Right ventricle myocardium inferior (tissue), 1 donor: ENCODE measurements at regions of chr2 and their contacts with region 1.

Region 1: GRCh38 chr2:237474931-237475703 is 11.9 kb upstream of the MLPH start:
- DNase-seq: peak; percentile 91
- ATAC-seq: peak; percentile 93

Region 2: DNA sequence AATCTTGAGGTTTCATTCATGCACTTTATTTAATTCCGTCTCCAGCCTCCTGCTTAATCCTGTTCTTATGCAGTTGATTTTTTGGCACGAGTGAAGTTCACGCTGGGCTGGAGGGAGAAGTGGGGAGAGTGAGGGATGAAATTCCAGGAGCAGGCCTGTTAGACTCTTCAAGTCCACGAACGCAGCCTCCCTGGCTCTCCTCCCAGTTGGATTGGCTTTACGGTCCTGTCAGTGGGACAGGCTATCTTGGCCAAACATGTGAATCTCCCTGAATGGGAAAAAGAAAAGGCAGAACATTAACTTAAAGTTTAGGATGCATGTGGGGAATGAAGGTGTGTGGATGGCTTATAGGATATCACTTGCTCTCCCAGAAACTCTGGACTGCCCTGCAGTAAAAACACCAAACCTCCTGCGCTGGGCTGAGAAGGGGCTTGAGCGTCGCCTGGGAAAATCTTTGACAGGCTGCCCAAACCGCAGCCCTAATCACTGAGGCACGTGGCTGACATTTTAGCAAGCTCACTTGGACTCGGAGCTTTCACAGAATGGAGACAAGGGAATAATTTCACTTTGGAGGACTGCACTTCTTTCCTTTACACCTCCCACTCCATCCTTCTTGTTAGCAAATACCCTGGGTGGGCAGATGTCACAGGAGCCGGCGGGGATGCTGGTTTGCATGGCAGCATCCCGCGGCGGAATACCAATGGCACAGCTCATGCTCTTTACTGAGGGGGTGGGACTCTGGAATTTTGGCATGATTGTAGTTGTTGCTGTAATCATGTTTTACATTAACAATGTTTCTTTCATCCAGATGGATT is 811.6 kb before region 1 on chr2:
- intact Hi-C with region 1: no loop called
- DNase-seq: peak; percentile 82
- ATAC-seq: peak; percentile 75

Region 3: DNA sequence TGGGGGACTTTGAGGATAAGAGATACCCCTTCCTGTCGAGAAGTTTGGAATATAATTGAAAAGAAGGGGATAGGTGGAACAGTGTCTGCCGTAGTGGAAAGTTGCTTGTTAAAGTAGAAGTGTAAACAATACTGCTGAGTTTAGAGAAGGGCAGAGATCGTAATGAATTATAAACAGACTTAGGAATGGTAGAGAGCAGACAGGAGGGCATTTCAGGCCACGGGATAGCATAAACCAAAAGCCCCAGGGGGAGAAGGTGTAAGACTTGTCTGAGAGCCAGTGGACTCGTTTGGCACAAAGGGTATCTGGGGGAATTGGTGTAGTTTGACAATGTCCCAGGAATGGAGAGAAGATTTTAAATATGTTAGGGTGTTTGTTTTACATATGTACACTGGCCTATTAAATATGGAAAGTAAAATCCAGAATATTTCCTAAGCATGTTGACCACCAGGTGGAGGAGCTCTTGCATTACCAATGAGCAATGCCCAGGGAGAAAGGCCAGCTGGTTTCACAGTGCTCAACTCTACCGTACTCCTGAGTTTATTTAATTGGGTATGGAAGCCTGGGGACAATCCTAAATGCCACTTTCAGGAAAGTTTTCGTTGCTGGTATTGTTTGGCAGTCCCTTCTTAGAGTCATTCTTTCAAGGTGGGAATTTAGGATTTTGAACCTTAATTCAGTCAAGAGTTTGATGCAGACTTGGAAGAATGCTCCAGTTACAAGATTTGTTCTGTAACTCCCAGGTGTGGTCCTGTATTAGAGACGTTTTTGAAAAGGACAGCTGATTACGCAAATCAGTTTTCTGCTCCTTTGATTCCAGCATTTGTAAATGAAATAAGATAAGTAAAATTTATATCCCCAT is 382.0 kb before region 1 on chr2:
- intact Hi-C with region 1: loop called (anchors 5 kb)
- DNase-seq: no peak
- ATAC-seq: peak; percentile 87

Region 4: GRCh38 chr2:237154082-237154638 is 321.0 kb before region 1 on chr2:
- intact Hi-C with region 1: loop called (anchors 10 kb)
- DNase-seq: no peak
- ATAC-seq: no peak

Region 5: DNA sequence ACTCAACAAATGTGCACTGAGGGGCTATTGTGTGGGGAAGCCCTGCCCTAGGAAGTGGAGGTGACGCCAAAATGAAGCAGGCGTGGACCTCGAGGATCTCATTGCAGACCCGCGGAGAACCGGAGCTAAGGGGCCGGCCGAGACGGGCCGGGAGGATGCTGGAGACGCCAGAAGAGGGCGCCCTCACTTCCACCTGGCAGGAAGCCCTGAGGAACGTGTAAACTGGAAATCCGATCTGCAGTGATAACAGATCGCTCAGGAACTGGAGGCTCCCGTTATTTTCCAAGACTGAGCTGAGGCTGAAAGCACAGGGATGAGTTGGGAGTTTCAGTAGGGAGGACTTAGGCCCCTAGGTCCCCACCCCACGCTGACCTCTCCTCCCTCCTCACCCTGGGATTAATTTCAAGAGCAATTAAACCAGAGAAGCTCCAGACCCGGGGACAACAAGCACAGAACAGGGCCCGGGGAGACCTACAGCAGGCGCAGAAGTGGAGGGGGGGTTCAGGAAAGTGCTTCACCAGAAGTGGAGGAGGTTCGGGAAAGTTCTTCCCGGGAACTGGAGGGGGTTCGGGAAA is 53.5 kb before region 1 on chr2:
- intact Hi-C with region 1: loop called (anchors 1 kb)
- DNase-seq: peak; percentile 80
- ATAC-seq: peak; percentile 84